ENCODE measurements at regions of chr7 and their contacts with region 1.

Region 1: GRCh38 chr7:37420946-37421695 is 27.5 kb downstream of the ELMO1 start:
- DNase-seq: no peak

Region 2: DNA sequence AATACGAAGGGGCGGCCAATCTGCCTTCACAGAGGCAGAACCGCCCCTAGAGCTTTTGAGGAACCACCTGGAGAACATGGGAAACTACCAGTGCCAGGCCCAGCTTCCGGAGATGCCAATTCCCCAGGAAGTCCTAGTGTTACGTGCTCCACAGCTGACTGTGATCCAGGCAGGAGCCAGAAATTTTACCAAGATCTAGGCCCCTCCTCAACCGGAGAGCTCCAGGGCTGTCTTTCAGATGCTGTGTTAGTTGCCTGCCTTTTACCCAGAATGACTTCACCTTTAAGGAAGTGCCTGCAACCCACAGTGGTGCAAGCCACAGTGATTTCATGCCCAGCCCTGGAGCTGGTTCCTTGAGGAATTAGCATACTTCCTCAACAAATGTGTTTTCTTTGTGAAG is 35.3 kb before region 1 on chr7:
- intact Hi-C with region 1: loop called in 1 of 2 experiments (anchors 1 kb)
- DNase-seq: no peak

Region 3: DNA sequence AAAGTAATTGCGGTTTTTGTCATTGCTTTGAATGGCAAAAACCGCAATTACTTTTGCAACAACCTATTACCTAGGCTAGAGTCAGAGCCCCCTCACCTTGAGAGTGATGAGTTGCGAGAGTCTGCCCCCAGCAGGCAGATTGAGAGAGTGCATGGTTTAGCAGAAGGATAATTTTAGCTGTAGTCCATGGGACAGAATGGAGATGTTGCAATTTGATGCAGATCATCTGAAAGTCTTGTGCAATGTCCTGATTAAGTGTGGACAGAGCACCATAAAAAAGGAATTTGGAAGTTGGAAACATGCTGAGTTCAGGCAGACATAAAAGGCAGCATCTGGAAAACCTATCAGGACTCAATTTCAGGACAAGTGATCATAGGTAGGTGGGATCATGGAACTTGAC is 311.1 kb after region 1 on chr7:
- intact Hi-C with region 1: no loop called
- DNase-seq: no peak